ENCODE measurements at regions of chr12 and their contacts with region 1.

Region 1: GRCh38 chr12:118135788-118136558 is at the start of gene PEBP1:
- H3K4me3 Mint-ChIP-seq: peak within 1 kb of the TSS; percentile 88
- H3K27ac Mint-ChIP-seq: peak within 1 kb of the TSS; percentile 83
- H3K4me1 Mint-ChIP-seq: peaks cover 21% of the 10 kb centered on the region
- H3K27me3 Mint-ChIP-seq: no peaks in the 10 kb centered on the region

Region 2: GRCh38 chr12:118016424-118017264 is 119.3 kb before region 1 on chr12 and contains the start of gene RFC5:
- intact Hi-C with region 1: loop called (anchors 5 kb)
- H3K4me3 Mint-ChIP-seq: peak within 1 kb of the TSS; percentile 92
- H3K27ac Mint-ChIP-seq: peak within 1 kb of the TSS; percentile 85
- H3K4me1 Mint-ChIP-seq: peaks cover 12% of the 10 kb centered on the region
- H3K27me3 Mint-ChIP-seq: peaks cover 10% of the 10 kb centered on the region